ENCODE measurements at regions of chr17 and their contacts with region 1.

Region 1: GRCh38 chr17:7583253-7584109 is at the start of gene MPDU1:
- DNase-seq: peak in 1 of 2 experiments; percentile 95
- H3K4me3 ChIP-seq: peak within 1 kb of the TSS; percentile 47 to 95 (median 70)
- H3K27ac ChIP-seq: peak within 1 kb of the TSS; percentile 98
- H3K4me1 ChIP-seq: peaks cover 0 to 19% (median 4%) of the 10 kb centered on the region in 4 experiments; a peak in 6 of 7 replicates
- H3K27me3 ChIP-seq: no peaks in the 10 kb centered on the region
- CTCF ChIP-seq: no peak
- EP300 ChIP-seq: no peak
- POLR2A ChIP-seq: peak; percentile 75 to 94
- RAD21 ChIP-seq: no peak
- total RNA-seq, gene MPDU1: 63.2 and 66.9 TPM in 2 replicates

Region 2: DNA sequence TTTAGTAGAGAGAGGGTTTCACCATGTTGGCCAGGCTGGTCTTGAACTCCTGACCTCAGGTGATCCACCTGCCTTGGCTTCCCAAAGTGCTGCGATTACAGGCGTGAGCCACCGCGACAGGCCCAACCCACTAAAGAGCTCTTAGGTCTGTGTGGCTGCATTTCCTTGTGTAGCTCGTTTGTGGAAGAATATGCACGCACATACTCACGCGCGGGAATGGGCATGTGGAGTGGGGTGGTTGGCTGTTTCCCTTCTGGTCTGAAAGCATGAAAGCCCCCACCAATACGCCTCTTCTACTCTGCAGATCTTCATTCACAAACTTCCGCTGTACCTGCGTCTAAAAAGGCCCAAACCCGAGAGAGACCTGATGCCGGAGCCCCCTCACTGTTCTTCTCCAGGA is 128.5 kb before region 1 on chr17:
- CTCF ChIA-PET with region 1: no interaction called
- POLR2A ChIA-PET with region 1: no interaction called
- DNase-seq: no peak
- H3K4me3 ChIP-seq: peak overlapping the region in 2 of 4 experiments; percentile 78 to 87; a peak in 4 of 8 replicates
- H3K27ac ChIP-seq: no peak overlapping the region
- H3K4me1 ChIP-seq: peaks cover 0 to 8% (median 0%) of the 10 kb centered on the region in 4 experiments; a peak in 2 of 7 replicates
- H3K27me3 ChIP-seq: no peaks in the 10 kb centered on the region; a peak in 1 of 7 replicates
- CTCF ChIP-seq: no peak
- EP300 ChIP-seq: no peak
- POLR2A ChIP-seq: no peak
- RAD21 ChIP-seq: no peak

Region 3: DNA sequence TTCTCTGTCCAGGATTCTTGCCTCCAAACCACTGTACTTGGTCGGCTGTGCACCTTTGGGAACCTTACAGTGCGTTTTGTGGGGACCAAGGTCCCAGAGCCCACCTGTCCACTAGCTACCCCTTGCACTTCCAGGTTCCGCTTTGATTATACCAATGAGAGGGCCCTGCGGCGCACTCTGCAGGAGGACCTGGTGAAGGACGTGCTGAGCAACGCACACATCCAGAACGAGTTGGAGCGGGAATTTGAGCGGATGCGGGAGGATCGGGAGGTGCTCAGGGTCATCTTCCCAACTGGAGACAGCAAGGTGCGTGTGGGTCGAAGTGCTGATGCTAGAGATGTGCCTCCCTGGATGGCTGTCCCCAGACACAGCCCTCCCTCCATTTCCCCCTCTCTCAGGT is 80.5 kb before region 1 on chr17:
- CTCF ChIA-PET with region 1: no interaction called
- POLR2A ChIA-PET with region 1: no interaction called
- DNase-seq: peak in 1 of 2 experiments; percentile 67
- H3K4me3 ChIP-seq: no peak overlapping the region
- H3K27ac ChIP-seq: no peak overlapping the region
- H3K4me1 ChIP-seq: no peaks in the 10 kb centered on the region
- H3K27me3 ChIP-seq: no peaks in the 10 kb centered on the region
- CTCF ChIP-seq: peak; percentile 51 to 68 (median 65)
- EP300 ChIP-seq: no peak
- POLR2A ChIP-seq: peak in 1 of 2 experiments; percentile 34; a peak in 2 of 3 replicates
- RAD21 ChIP-seq: peak; percentile 71 to 76

Region 4: DNA sequence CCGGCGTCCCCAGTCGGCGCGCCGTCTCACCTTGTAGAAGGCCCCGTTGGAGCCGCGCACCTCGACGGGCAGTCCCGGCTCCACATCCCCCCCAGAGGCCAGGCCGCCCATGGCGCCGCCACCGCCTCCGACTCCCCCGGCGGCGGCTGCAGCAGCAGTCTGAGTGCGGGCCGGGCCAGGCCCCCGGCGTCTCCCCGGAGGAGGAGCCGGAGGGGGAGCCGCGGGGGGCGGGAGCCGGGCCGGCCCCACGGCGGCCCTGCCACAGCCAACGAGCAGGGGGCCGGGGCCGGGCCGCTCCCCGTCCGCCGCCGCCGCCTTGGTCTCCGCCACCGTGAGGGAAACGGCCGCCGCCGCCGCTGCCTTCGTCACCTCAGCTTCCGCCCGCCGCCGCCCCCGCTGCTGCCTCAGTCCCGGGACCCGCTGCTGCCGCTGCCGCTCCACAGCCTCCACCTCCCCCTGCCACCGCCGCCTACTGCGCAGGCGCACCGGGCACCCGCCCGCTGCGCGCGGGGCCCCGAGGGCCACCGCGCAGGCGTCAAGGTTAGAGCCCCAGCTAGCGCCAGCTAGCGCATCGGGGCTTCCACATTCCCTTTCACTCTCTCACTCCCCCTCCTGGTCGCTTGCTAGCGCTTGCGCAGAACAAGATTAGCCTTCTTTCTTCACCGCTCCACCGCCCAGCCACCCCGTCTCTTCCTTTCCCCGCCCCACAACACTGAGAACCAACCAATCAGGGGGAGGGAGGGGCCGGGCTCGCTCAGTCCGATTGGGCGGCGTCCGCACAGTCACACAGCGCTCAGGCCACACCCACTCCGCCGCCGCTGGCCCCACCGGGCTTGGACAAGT is 31.2 kb after region 1 on chr17 and contains the start of gene FXR2:
- CTCF ChIA-PET with region 1: interaction called, 11 read pairs
- POLR2A ChIA-PET with region 1: interaction called, 20 read pairs
- DNase-seq: peak; percentile 97 to 100
- H3K4me3 ChIP-seq: peak within 1 kb of the TSS; percentile 87 to 95 (median 92)
- H3K27ac ChIP-seq: peak within 1 kb of the TSS; percentile 52; the same call in 1 of the 2 replicates
- H3K4me1 ChIP-seq: peaks cover 0 to 5% (median 1%) of the 10 kb centered on the region in 4 experiments; a peak in 4 of 7 replicates
- H3K27me3 ChIP-seq: no peaks in the 10 kb centered on the region
- CTCF ChIP-seq: peak; percentile 62 to 76 (median 64)
- EP300 ChIP-seq: no peak
- POLR2A ChIP-seq: peak in 1 of 2 experiments; percentile 24; a peak in 1 of 3 replicates
- RAD21 ChIP-seq: peak; percentile 14 to 29
- total RNA-seq, gene FXR2: 26.2 and 26.8 TPM in 2 replicates

Region 5: DNA sequence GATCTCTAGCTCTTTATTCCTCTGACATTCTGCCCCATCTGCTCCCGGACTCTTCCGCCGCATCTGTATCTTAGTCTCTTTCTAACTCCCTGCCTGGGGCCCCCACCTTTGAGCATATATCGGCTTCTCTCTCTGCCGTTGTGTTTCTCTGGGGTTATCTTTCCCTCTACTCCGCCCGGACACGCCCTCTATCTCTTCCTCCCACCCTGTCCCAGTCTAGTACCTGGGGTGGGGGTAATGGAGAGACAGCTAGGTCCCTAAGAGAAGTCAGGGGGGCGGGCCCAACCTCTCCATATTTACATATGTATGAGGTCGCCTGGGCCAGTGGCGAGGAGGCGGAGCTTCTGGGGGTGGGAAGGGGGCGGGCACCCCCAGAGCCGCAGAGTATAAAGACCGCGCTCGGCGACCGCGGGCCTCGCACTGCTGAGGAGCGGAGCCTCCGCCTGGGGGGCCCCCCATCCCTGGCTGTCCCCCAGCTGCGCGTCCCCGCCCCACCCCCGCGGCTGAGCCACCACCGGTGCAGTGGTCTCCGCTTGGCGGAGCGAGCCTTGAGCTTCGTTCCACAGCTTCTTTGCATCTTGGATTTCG is 67.1 kb after region 1 on chr17 and contains the start of gene ATP1B2:
- CTCF ChIA-PET with region 1: interaction called, 3 read pairs
- POLR2A ChIA-PET with region 1: interaction called, 13 read pairs
- DNase-seq: peak; percentile 72 to 90
- H3K4me3 ChIP-seq: peak within 1 kb of the TSS; percentile 43 to 87 (median 63)
- H3K27ac ChIP-seq: no peak within 1 kb of the TSS
- H3K4me1 ChIP-seq: peaks cover 0 to 12% (median 8%) of the 10 kb centered on the region in 4 experiments; a peak in 5 of 7 replicates
- H3K27me3 ChIP-seq: peaks cover 0 to 13% (median 4%) of the 10 kb centered on the region in 4 experiments; a peak in 4 of 7 replicates
- CTCF ChIP-seq: no peak
- EP300 ChIP-seq: no peak
- POLR2A ChIP-seq: peak in 1 of 2 experiments; percentile 81; a peak in 2 of 3 replicates
- RAD21 ChIP-seq: no peak
- total RNA-seq, gene ATP1B2: 19.8 and 21.0 TPM in 2 replicates

Region 6: GRCh38 chr17:7755095-7755890 is 171.8 kb after region 1 on chr17:
- CTCF ChIA-PET with region 1: no interaction called
- POLR2A ChIA-PET with region 1: no interaction called
- DNase-seq: no peak
- H3K4me3 ChIP-seq: no peak overlapping the region
- H3K27ac ChIP-seq: no peak overlapping the region
- H3K4me1 ChIP-seq: no peaks in the 10 kb centered on the region; a peak in 1 of 7 replicates
- H3K27me3 ChIP-seq: no peaks in the 10 kb centered on the region; a peak in 1 of 7 replicates
- CTCF ChIP-seq: no peak
- EP300 ChIP-seq: no peak
- POLR2A ChIP-seq: no peak
- RAD21 ChIP-seq: no peak